HEK293 (cell line): ENCODE measurements at regions of chr6 and their contacts with region 1.

Region 1: DNA sequence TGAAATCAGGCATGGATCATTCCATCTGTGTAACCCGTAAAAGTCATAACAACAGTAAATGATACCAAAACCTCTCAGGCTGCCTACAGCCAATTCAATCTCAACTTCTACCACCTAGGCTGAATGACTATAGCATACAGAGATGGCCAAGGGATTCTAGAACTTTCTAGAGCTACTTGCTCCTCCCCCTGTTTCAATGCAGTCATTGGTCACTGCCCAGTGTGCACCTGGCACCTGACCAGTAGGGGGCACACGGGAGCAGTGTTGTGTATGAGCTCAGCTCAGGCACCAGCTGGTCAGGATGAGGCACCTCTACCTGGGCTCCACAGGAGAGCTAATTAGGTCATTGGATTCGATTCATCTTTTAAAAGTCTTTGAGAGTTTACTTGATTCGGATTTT is 86.2 kb downstream of the PLEKHG1 start:
- H3K4me3 ChIP-seq: no peak overlapping the region
- H3K27ac ChIP-seq: no peak overlapping the region
- H3K4me1 ChIP-seq: peaks cover 12% of the 10 kb centered on the region; the same call in 1 of the 2 replicates
- CTCF ChIP-seq: peak; percentile 59; the same call in 1 of the 2 replicates

Region 2: DNA sequence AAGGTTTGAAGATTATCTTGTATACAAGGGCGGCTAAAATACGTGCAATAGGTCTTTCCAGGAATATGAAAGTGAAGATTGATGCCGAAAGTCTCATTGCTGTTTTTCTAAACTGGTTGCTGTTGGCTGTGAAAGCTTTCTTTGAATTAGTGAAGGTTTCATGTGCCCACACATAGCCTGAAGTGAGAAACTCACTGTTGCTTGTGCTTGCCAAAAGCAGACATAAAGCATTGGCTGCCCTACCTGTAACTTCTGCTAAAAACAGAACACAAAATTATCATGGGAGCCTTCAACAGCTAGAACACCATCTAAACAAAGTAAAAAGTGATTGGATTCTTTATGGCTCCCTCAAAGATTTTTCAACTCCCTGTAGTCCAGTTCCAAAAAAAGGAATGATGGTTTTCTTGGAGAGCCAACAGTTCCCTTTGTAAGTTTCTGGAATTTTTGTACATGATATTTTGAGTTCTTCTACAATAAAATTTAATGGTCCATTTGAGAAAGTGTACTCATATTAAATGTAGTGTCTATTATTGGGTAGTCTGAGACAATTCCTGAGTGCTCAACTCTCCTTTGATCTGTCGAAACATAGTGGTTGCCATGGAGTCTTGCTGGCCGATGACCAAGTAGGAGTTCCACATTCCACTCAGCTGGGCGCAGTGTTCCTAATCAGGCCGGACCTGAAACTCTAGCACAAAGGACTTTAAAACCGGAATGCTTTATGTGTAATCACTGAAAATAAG is 17.7 kb before region 1 on chr6:
- CTCF ChIA-PET with region 1: interaction called, 29 read pairs
- POLR2A ChIA-PET with region 1: interaction called, 3 read pairs
- H3K4me3 ChIP-seq: no peak overlapping the region
- H3K27ac ChIP-seq: peak overlapping the region; percentile 20; the same call in 1 of the 2 replicates
- H3K4me1 ChIP-seq: peaks cover 23% of the 10 kb centered on the region
- CTCF ChIP-seq: no peak; the same call in 1 of the 2 replicates

Region 3: DNA sequence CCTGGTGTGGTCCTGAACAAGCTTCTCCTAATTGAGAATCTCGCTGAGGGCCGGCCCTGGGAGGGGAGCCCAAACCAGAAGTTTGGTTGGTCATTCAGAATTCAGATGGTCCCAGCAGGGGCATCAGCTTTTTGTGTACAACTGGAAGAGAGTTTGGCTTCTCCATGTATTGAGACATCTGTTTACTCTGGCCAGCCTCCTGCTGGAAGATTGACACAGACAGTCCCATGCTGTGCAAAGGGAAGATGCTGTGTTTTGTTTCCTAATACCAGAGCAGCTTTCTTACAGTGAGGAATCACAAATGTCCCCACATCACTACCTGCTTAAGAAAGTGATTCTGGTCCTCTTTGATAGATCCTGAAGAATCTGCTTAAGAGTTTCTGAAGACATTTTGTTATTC is 11.7 kb after region 1 on chr6:
- CTCF ChIA-PET with region 1: interaction called, 50 read pairs
- POLR2A ChIA-PET with region 1: no interaction called
- H3K4me3 ChIP-seq: no peak overlapping the region
- H3K27ac ChIP-seq: no peak overlapping the region
- H3K4me1 ChIP-seq: peaks cover 20% of the 10 kb centered on the region
- CTCF ChIP-seq: no peak

Region 4: GRCh38 chr6:150702675-150703074 is 16.8 kb after region 1 on chr6:
- CTCF ChIA-PET with region 1: interaction called, 50 read pairs
- POLR2A ChIA-PET with region 1: no interaction called
- H3K4me3 ChIP-seq: no peak overlapping the region
- H3K27ac ChIP-seq: no peak overlapping the region
- H3K4me1 ChIP-seq: peaks cover 3% of the 10 kb centered on the region
- CTCF ChIP-seq: no peak

Region 5: GRCh38 chr6:150720774-150721233 is 34.9 kb after region 1 on chr6:
- CTCF ChIA-PET with region 1: interaction called, 14 read pairs
- POLR2A ChIA-PET with region 1: no interaction called
- H3K4me3 ChIP-seq: peak overlapping the region; percentile 17
- H3K27ac ChIP-seq: peak overlapping the region; percentile 56
- H3K4me1 ChIP-seq: peaks cover 31% of the 10 kb centered on the region
- CTCF ChIP-seq: no peak; the same call in 1 of the 2 replicates

Region 6: GRCh38 chr6:150741633-150742504 is 56.0 kb after region 1 on chr6:
- CTCF ChIA-PET with region 1: interaction called, 13 read pairs
- POLR2A ChIA-PET with region 1: no interaction called
- H3K4me3 ChIP-seq: no peak overlapping the region
- H3K27ac ChIP-seq: no peak overlapping the region
- H3K4me1 ChIP-seq: peaks cover 16% of the 10 kb centered on the region
- CTCF ChIP-seq: no peak